Mammary epithelial cell (primary cell): ENCODE measurements at regions of chr17 and their contacts with region 1.

Region 1: DNA sequence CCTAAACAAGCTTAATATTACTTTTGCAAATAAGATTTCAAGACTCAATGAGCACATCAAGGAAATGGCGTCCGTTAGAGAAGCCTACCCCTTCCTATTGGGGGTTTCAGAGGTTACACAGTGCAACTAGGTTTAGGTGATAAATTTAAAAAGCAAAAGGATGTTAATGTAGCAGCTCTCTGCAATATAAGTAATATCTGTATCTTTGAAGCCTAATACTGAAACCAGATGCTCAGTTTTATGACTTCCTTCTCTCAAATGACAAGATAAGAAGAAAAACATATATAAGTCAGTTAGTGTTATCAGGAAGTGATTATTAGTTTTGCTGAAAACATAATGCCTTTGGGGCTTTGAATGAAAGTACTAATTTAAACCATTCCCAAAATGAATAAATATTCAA is 54.3 kb upstream of the MED13 start:
- DNase-seq: no peak
- H3K4me3 ChIP-seq: no peak overlapping the region
- H3K27ac ChIP-seq: no peak overlapping the region
- H3K4me1 ChIP-seq: no peaks in the 10 kb centered on the region
- H3K27me3 ChIP-seq: no peaks in the 10 kb centered on the region
- CTCF ChIP-seq: no peak

Region 2: GRCh38 chr17:61600621-61601020 is 518.8 kb before region 1 on chr17:
- CTCF ChIA-PET with region 1: interaction called, 17 read pairs
- dilution Hi-C with region 1: no loop called
- in situ Hi-C with region 1: no loop called
- intact Hi-C with region 1: no loop called
- DNase-seq: no peak
- H3K4me3 ChIP-seq: no peak overlapping the region
- H3K27ac ChIP-seq: no peak overlapping the region
- H3K4me1 ChIP-seq: no peaks in the 10 kb centered on the region
- H3K27me3 ChIP-seq: peaks cover 3% of the 10 kb centered on the region
- CTCF ChIP-seq: no peak